ENCODE measurements at regions of chr15 and their contacts with region 1.

Region 1: GRCh38 chr15:40763801-40764732 is at the start of gene GCHFR:
- DNase-seq: peak; percentile 23 to 82 (median 64)
- ATAC-seq: peak; percentile 28
- H3K4me3 ChIP-seq: peak within 1 kb of the TSS; percentile 85 to 91
- H3K4me3 Mint-ChIP-seq: peak within 1 kb of the TSS; percentile 89
- H3K27ac ChIP-seq: peak within 1 kb of the TSS; percentile 51 to 73
- H3K27ac Mint-ChIP-seq: peak within 1 kb of the TSS; percentile 91
- H3K4me1 ChIP-seq: peaks cover 39% of the 10 kb centered on the region
- H3K4me1 Mint-ChIP-seq: peaks cover 39% of the 10 kb centered on the region
- H3K27me3 ChIP-seq: no peaks in the 10 kb centered on the region
- H3K27me3 Mint-ChIP-seq: no peaks in the 10 kb centered on the region
- CTCF ChIP-seq: no peak
- total RNA-seq, gene GCHFR: 17.2 to 17.3 TPM

Region 2: GRCh38 chr15:40564591-40565332 is 199.3 kb before region 1 on chr15 and contains the start of gene CCDC32:
- CTCF ChIA-PET with region 1: no interaction called
- POLR2A ChIA-PET with region 1: no interaction called
- intact Hi-C with region 1: loop called in 1 of 2 experiments (anchors 2 kb)
- DNase-seq: peak; percentile 84 to 99 (median 94)
- ATAC-seq: peak; percentile 90
- H3K4me3 ChIP-seq: peak within 1 kb of the TSS; percentile 89 to 97
- H3K4me3 Mint-ChIP-seq: peak within 1 kb of the TSS; percentile 95
- H3K27ac ChIP-seq: peak within 1 kb of the TSS; percentile 87 to 97
- H3K27ac Mint-ChIP-seq: peak within 1 kb of the TSS; percentile 97
- H3K4me1 ChIP-seq: peaks cover 11% of the 10 kb centered on the region
- H3K4me1 Mint-ChIP-seq: peaks cover 52% of the 10 kb centered on the region
- H3K27me3 ChIP-seq: no peaks in the 10 kb centered on the region
- H3K27me3 Mint-ChIP-seq: no peaks in the 10 kb centered on the region
- CTCF ChIP-seq: no peak
- total RNA-seq, gene CCDC32: 18.3 to 20.3 TPM

Region 3: DNA sequence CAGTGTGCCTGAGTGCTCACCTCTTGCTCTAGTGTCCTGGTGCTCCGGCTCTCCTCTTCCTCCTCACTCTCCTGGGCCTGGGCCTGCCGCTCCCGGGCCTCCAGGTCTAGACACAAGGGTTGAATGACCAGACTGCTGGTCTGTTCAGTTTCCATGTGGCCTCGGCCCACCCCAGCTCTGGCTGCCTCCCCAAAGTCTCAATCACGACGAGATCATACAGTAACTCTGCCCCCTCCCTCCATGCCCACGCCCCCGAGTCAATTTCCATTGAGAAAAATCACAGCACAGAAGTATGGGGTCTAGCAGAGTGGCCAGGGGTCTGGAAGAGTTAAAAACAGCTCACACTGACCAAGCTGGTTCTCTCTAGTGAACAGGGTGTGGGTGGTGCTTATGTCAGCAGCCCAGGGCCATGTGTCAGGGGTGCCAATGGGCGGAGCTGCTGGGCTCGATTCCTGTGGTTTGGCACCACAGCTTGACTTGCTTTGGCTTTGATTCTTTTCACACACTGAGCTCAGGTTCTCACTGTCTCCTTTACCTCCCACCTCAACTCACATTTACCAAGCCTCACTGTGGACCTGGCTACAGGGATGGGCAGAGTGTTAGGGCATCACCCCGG is 12.6 kb after region 1 on chr15:
- CTCF ChIA-PET with region 1: interaction called, 36 read pairs
- POLR2A ChIA-PET with region 1: interaction called, 6 read pairs
- intact Hi-C with region 1: loop called in 1 of 2 experiments (anchors 1 kb)
- DNase-seq: peak in 6 of 9 experiments; percentile 46 to 89 (median 66)
- ATAC-seq: peak; percentile 96
- H3K4me3 ChIP-seq: no peak overlapping the region
- H3K4me3 Mint-ChIP-seq: no peak overlapping the region
- H3K27ac ChIP-seq: peak overlapping the region in 1 of 2 experiments; percentile 38
- H3K27ac Mint-ChIP-seq: peak overlapping the region; percentile 70
- H3K4me1 ChIP-seq: peaks cover 7% of the 10 kb centered on the region
- H3K4me1 Mint-ChIP-seq: peaks cover 7% of the 10 kb centered on the region
- H3K27me3 ChIP-seq: no peaks in the 10 kb centered on the region
- H3K27me3 Mint-ChIP-seq: no peaks in the 10 kb centered on the region
- CTCF ChIP-seq: no peak

Measured in CD8-positive, alpha-beta T cell (primary cell).